Naive thymus-derived CD4-positive, alpha-beta T cell (primary cell): ENCODE measurements at regions of chr12 and their contacts with region 1.

Region 1: GRCh38 chr12:110600254-110600653 is 13.7 kb upstream of the TCTN1 start:
- DNase-seq: peak in 7 of 9 donors; percentile 36 to 69 (median 56)
- ATAC-seq: peak; percentile 70
- H3K4me3 ChIP-seq: no peak overlapping the region
- H3K4me3 Mint-ChIP-seq: no peak overlapping the region
- H3K27ac ChIP-seq: no peak overlapping the region
- H3K27ac Mint-ChIP-seq: peak overlapping the region in 6 of 9 donors; percentile 6 to 63 (median 24)
- H3K4me1 ChIP-seq: no peaks in the 10 kb centered on the region
- H3K4me1 Mint-ChIP-seq: peaks cover 4 to 21% (median 15%) of the 10 kb centered on the region in 7 donors
- H3K27me3 ChIP-seq: no peaks in the 10 kb centered on the region
- H3K27me3 Mint-ChIP-seq: no peaks in the 10 kb centered on the region

Region 2: DNA sequence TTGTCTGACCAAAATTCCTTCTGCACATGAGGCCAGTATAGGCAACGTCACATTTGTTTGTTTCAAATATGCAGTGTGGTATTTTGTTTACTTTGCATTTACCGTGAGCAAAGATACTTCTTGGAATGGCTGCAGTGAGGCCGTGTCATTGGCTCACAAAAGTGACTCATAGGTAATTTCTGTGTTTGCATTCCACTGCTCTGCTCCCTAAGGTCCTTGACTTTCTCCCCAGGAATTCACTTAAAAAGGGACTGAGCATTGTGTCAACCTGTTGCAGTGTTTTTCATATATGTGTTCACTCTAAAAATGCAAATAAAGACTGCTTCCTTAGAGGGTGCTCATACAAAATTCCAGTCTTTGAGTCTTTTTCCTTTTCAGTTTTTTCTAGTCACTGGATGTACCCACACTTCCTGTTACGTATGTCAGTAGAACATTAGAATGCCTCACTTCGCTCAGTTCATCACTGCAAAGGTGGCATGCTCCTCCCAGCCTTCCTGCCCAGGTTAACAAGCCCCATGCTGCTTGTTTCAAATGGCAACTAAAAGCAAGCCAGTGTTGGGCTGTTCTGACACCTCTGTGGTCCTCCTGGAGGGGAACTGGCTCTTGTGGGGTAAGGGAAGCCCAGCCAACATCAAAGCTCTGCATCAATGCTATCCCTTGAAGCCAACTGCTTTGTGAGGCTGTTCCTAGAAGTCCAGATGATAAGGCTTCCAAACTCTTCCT is 561.0 kb before region 1 on chr12:
- CTCF ChIA-PET with region 1: no interaction called
- POLR2A ChIA-PET with region 1: no interaction called
- intact Hi-C with region 1: no loop called
- DNase-seq: peak in 7 of 9 donors; percentile 34 to 59 (median 56)
- ATAC-seq: peak; percentile 70
- H3K4me3 ChIP-seq: no peak overlapping the region
- H3K4me3 Mint-ChIP-seq: peak overlapping the region; percentile 26 to 68 (median 43)
- H3K27ac ChIP-seq: peak overlapping the region; percentile 60
- H3K27ac Mint-ChIP-seq: peak overlapping the region; percentile 82 to 97 (median 92)
- H3K4me1 ChIP-seq: peaks cover 8 to 24% of the 10 kb centered on the region in 2 donors
- H3K4me1 Mint-ChIP-seq: peaks cover 25 to 63% (median 33%) of the 10 kb centered on the region in 7 donors
- H3K27me3 ChIP-seq: no peaks in the 10 kb centered on the region
- H3K27me3 Mint-ChIP-seq: no peaks in the 10 kb centered on the region

Region 3: DNA sequence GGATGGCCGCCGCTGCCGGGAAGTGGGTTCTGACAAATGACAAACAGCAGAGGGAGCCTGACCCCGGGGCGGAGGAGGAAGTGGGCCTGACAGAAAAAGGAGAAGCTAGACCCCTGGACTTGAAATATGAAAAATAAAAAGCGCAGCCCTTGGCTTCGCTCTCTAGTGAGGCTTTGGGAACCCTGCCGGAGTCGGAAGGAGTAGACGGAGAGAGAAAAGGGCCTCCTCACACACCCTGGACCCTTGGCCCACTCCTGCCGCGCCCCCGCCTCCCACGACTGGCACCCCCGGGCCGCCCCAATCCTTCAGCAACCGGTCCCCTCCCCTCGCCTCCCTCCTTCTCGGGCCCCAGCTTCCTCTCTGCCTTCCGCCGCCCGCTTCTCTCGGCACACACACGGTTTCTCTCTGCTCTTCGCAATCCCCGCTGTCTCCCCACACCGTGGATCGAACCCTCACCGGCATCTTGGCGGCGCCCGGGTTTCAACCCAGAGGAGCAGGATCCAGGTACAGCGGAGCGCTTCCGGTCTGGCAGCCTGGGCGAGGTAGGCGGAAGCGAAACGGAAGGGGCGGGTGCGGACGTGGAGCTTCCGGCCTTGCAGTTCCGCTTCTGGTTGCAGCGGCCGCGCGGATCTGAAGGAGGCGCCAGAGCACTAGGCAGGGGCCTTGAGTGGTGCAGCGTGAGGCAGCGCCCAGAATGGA is 150.3 kb before region 1 on chr12 and contains the start of gene ARPC3:
- CTCF ChIA-PET with region 1: interaction called, 87 read pairs
- POLR2A ChIA-PET with region 1: interaction called, 31 read pairs
- intact Hi-C with region 1: loop called (anchors 1 kb)
- DNase-seq: peak; percentile 86 to 95 (median 94)
- ATAC-seq: peak; percentile 98
- H3K4me3 ChIP-seq: peak within 1 kb of the TSS; percentile 95
- H3K4me3 Mint-ChIP-seq: peak within 1 kb of the TSS; percentile 90 to 100 (median 99)
- H3K27ac ChIP-seq: peak within 1 kb of the TSS; percentile 93
- H3K27ac Mint-ChIP-seq: peak within 1 kb of the TSS; percentile 94 to 100 (median 99)
- H3K4me1 ChIP-seq: peaks cover 20 to 22% of the 10 kb centered on the region in 2 donors
- H3K4me1 Mint-ChIP-seq: peaks cover 31 to 51% (median 44%) of the 10 kb centered on the region in 7 donors
- H3K27me3 ChIP-seq: no peaks in the 10 kb centered on the region
- H3K27me3 Mint-ChIP-seq: peaks cover 0 to 3% (median 0%) of the 10 kb centered on the region in 5 donors
- total RNA-seq, gene ARPC3: 166 to 381 (median 187) TPM

Region 4: DNA sequence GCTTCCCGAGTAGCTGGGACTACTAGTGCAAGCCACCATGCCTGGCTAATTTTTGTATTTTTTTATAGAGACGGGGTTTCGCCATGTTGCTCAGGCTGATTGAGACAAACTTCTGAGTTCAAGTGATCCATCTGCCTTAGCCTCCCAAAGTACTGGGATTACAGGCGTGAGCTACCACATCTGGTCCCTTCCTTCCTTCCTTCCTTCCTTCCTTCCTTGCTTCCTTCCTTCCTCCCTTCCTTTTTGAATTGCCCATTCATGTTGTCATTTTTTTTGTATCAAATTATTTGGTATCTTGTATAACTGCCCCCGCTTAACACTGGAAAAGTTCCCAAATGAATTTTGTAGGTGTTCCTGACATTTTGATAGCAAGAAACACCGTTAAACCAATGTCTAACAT is 86.4 kb before region 1 on chr12:
- CTCF ChIA-PET with region 1: interaction called, 58 read pairs
- POLR2A ChIA-PET with region 1: interaction called, 3 read pairs
- intact Hi-C with region 1: loop called (anchors 1 kb)
- DNase-seq: no peak
- ATAC-seq: no peak
- H3K4me3 ChIP-seq: no peak overlapping the region
- H3K4me3 Mint-ChIP-seq: no peak overlapping the region
- H3K27ac ChIP-seq: no peak overlapping the region
- H3K27ac Mint-ChIP-seq: no peak overlapping the region
- H3K4me1 ChIP-seq: no peaks in the 10 kb centered on the region
- H3K4me1 Mint-ChIP-seq: peaks cover 0 to 5% (median 0%) of the 10 kb centered on the region in 7 donors
- H3K27me3 ChIP-seq: no peaks in the 10 kb centered on the region
- H3K27me3 Mint-ChIP-seq: peaks cover 0 to 9% (median 0%) of the 10 kb centered on the region in 5 donors

Region 5: DNA sequence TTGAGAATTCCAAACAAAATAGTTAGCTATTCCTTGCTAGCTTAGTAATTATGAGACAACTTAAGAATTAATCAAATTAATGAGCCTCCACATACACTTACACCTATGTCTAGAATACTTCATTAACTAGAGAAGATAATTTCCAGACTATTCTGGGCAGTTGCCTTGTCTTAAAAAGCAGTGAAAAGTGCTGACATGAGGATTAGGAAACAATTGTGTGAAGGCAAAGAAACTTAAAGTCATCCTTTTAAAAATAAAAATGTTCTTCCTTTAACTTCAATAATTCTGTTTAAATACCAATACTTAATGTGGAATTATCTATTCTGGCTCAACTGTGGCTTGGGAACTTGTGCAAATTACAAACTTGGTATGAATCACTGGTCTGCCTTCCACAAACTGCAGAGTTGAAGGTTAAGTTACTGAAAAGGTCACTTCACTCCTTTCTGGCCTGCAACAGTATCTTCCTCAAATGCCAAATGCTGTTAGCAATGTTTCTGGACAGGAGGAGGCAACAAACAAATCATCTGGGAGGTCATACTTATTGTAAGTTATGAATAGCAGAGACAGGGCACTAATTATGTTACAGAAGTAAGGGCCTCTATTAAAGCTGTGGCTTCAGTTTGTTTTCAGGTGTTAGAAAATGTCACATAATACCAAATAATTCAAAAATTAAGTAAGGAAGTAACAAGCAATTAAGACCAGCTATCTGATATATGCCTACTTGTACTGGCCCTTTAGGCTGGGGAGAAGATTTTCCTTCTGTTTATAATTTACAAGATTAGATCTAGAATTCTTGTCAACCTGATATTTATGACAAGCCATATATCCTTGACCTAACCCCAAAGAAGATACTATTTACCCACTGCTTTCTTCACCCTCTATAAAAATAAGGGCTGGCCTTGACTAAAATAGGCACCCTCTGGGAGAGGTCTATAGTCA is 36.3 kb before region 1 on chr12:
- CTCF ChIA-PET with region 1: interaction called, 41 read pairs
- POLR2A ChIA-PET with region 1: interaction called, 4 read pairs
- intact Hi-C with region 1: no loop called
- DNase-seq: no peak
- ATAC-seq: peak; percentile 33
- H3K4me3 ChIP-seq: no peak overlapping the region
- H3K4me3 Mint-ChIP-seq: peak overlapping the region in 7 of 10 donors; percentile 1 to 86 (median 23)
- H3K27ac ChIP-seq: peak overlapping the region; percentile 71
- H3K27ac Mint-ChIP-seq: peak overlapping the region; percentile 77 to 98 (median 94)
- H3K4me1 ChIP-seq: peaks cover 8 to 53% of the 10 kb centered on the region in 2 donors
- H3K4me1 Mint-ChIP-seq: peaks cover 55 to 93% (median 66%) of the 10 kb centered on the region in 7 donors
- H3K27me3 ChIP-seq: no peaks in the 10 kb centered on the region
- H3K27me3 Mint-ChIP-seq: no peaks in the 10 kb centered on the region

Region 6: DNA sequence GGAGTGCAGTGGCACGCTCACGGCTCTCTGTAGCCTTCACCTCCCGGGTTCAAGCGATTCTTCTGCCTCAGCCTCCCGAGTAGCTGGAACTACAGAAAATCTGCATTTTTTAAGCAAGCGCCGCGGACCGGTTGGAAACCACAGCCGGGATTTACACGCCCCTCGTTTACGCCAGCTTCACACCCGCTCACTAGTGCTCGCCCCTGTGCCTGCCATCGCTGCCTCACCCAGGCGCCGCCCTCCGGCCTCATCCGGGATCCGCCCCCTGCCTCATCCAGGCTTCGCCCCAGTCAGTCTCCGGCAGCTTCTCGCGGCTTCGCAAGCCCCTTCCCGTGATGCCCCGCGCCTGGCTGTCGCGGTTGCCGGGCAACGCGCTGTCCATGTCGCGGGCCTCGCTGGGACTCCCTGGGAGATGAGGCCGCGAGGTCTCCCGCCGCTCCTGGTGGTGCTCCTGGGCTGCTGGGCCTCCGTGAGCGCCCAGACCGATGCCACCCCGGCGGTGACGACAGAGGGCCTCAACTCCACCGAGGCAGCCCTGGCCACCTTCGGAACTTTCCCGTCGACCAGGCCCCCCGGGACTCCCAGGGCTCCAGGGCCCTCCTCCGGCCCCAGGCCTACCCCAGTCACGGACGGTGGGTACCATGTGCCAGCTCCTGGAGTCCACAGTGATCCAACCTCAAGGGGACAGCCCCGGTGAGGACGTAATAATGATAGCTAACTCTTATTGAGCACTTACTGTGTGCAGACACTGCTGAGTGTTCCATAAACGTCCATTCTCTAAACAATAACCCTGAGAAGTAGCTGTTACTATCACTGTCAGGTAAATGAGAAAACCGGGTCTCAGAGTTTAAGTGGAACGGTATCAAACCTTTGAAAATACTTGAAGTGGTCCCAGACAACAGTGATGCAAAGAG is 13.8 kb after region 1 on chr12 and contains the start of gene TCTN1:
- CTCF ChIA-PET with region 1: interaction called, 19 read pairs
- POLR2A ChIA-PET with region 1: interaction called, 7 read pairs
- intact Hi-C with region 1: loop called in 1 of 2 experiments (anchors 1 kb)
- DNase-seq: peak; percentile 88 to 98 (median 93)
- ATAC-seq: peak; percentile 100
- H3K4me3 ChIP-seq: peak within 1 kb of the TSS; percentile 75
- H3K4me3 Mint-ChIP-seq: peak within 1 kb of the TSS; percentile 81 to 89 (median 88)
- H3K27ac ChIP-seq: peak within 1 kb of the TSS; percentile 87
- H3K27ac Mint-ChIP-seq: peak within 1 kb of the TSS; percentile 31 to 92 (median 87)
- H3K4me1 ChIP-seq: peaks cover 4 to 6% of the 10 kb centered on the region in 2 donors
- H3K4me1 Mint-ChIP-seq: peaks cover 0 to 10% (median 4%) of the 10 kb centered on the region in 7 donors
- H3K27me3 ChIP-seq: no peaks in the 10 kb centered on the region
- H3K27me3 Mint-ChIP-seq: no peaks in the 10 kb centered on the region
- total RNA-seq, gene TCTN1: 5.2 to 13.0 (median 10.2) TPM

Region 7: DNA sequence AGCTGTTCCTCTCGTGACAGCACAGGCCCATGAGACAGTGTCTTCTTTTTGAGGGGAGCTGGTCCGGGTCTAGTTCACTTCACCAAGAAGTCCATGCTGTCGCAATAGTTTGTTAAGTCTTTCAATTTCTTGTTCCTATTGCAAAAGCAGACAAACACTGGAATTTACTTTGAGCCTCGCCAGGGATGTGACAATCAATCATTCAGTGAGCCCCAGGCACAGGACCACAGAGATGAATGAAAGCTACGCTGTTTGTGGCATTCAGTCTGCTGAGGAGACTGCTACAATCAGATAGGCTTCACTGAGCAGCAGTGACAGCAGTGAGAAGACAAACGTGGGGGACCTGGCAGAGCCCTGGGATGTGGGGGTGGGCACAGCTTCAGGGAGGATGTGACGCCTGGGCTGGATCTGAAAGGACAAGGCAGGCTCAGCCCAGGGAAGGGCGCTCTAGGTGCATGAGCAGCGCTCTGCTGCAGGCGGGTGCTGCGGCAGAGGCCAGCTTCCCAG is 49.1 kb after region 1 on chr12:
- CTCF ChIA-PET with region 1: no interaction called
- POLR2A ChIA-PET with region 1: no interaction called
- intact Hi-C with region 1: no loop called
- DNase-seq: no peak
- ATAC-seq: no peak
- H3K4me3 ChIP-seq: no peak overlapping the region
- H3K4me3 Mint-ChIP-seq: no peak overlapping the region
- H3K27ac ChIP-seq: no peak overlapping the region
- H3K27ac Mint-ChIP-seq: peak overlapping the region in 4 of 9 donors; percentile 65 to 88 (median 88)
- H3K4me1 ChIP-seq: peaks cover 0 to 16% of the 10 kb centered on the region in 2 donors
- H3K4me1 Mint-ChIP-seq: peaks cover 11 to 50% (median 33%) of the 10 kb centered on the region in 7 donors
- H3K27me3 ChIP-seq: no peaks in the 10 kb centered on the region
- H3K27me3 Mint-ChIP-seq: no peaks in the 10 kb centered on the region

Region 8: DNA sequence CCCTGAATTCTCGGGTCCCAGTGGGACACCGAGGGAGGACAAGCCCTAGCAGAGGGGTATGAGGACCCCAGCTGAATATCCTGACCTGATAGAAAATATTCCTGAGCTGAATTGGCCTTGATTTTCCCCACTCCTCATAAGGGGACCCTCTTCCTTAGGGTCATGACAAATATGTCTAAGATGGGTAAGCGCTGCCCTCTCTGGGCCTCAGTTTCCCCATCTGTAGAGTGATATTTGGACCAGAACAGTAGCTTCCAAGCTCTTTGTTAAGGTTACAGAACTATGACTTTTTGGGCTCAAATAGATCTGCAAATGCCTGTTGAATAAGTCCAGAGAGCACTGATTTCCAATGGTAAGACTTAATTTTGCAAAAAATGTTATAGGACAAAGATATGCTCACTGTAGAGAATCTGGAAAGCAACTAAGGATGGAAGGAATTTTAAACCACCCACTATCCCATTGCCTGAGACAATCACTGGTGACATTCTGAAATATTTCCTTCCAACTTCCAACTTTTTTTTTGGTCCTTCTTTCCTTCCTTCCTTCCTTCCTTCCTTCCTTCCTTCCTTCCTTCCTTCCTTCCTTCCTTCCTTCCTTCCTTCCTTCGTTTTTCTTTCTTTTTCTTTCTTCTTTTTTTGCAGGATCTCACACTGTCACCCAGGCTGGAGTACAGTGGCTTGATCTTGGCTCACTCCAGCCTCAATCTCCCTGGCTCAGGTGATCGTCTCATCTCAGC is 288.2 kb after region 1 on chr12:
- CTCF ChIA-PET with region 1: interaction called, 3 read pairs
- POLR2A ChIA-PET with region 1: no interaction called
- intact Hi-C with region 1: loop called in 1 of 2 experiments (anchors 1 kb)
- DNase-seq: no peak
- ATAC-seq: no peak
- H3K4me3 ChIP-seq: no peak overlapping the region
- H3K4me3 Mint-ChIP-seq: peak overlapping the region; percentile 51 to 97 (median 92)
- H3K27ac ChIP-seq: no peak overlapping the region
- H3K27ac Mint-ChIP-seq: peak overlapping the region in 5 of 9 donors; percentile 69 to 91 (median 77)
- H3K4me1 ChIP-seq: peaks cover 0 to 4% of the 10 kb centered on the region in 2 donors
- H3K4me1 Mint-ChIP-seq: peaks cover 0 to 8% (median 4%) of the 10 kb centered on the region in 7 donors
- H3K27me3 ChIP-seq: no peaks in the 10 kb centered on the region
- H3K27me3 Mint-ChIP-seq: peaks cover 0 to 12% (median 0%) of the 10 kb centered on the region in 5 donors